ENCODE measurements at regions of chr11 and their contacts with region 1.

Region 1: DNA sequence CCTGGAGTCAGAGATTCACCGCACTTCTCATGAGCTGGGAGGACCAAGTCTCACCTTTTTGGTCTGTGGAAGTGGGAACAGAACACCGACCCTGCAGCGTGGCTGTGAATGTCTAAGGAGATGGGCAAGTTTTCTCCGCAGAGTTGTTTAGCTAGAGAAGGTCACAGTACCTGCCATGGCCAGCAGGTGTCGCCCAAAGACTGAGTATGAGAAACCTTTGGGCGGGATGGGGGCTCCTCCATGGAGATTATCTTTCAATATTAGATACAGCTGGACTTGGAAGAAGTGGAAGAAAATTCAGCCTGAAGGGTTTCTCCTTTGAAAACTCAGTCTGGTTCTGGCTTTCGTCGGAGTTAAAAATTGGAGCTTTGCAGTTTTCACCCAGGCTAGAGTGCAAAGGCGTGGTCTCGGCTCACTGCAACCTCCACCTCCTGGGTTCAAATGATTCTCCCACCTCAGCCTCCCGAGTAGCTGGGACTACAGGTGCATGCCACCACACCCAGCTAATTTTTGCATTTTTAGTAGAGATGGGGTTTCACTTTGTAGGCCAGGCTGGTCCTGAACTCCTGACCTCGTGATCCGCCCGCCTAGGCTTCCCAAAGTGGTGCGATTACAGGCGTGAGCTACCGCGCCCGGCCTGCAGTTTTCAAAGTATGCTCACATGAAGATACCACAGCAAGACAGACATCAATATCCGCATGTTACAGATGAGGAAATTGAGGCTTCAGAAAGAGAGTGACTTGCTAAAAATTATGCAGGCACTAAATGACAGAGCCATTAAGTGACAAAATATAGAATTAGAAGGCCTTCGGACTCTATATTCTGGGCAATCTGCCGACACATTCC is 10.7 kb upstream of the DSCAML1 start:
- DNase-seq: peak; percentile 78
- CTCF ChIP-seq: peak; percentile 87

Region 2: GRCh38 chr11:117468888-117469287 is 338.8 kb before region 1 on chr11:
- CTCF ChIA-PET with region 1: no interaction called
- POLR2A ChIA-PET with region 1: no interaction called
- DNase-seq: no peak
- CTCF ChIP-seq: no peak

Region 3: DNA sequence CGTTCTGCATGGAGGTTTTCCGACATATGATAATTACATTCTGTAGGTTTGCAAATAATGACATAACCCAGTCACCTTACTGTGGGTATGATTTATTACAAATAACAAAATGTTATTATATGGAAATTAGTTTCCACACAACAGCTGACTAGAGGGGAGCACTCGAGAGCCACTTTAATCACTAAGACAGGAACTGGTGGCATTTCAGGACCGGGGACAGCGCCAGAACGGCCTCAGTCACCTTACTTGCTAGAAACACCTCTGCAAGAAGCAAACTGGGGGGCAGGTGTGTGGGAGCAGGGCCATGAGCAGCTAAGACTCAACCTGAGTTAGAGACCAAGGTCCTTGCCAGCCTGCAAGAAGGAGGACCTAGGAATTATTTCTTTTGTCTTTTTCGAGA is 210.6 kb before region 1 on chr11:
- CTCF ChIA-PET with region 1: no interaction called
- POLR2A ChIA-PET with region 1: no interaction called
- DNase-seq: peak; percentile 48
- CTCF ChIP-seq: no peak

Region 4: DNA sequence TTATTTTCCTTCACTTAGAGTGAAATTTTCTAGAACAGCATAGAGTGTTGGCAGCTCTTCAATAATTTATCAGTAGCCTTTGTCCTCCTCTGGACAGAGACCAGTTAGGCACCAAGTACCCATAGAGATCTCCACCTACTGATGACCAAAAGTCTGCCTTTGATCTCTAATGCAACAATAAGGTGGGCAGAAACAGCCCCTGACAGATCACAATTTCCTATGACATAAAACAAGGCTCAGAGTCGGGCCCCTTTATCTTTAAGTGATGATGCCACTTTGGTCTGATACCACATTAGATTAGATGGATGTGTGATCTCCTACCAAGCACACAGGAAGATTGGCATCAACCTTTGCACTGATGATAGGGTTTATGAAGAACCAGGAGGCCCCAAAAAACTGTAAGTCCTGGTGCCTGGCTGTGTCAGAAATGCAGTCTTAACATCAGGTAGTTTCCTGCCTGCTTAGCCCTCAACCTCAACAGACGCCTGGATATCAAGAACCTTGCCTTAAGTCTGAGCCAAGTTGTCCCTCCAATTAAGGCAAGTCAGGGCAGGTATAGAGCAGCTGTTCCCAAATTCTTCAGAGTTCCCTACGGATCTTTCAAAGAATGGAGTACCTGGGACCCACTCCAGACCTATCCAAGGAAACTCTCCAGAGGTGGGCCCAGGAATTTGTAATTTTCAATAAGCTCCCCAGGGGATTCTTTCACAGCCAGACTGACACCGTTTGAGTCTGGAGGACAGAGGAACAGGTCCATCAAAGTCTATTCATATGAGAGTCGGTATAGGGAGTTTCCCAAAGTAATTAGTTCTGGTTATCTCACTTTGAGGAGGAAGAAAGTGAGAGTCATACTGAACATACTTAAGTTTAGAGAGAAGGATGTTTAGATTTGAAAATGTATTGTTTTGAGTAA is 238.6 kb after region 1 on chr11:
- CTCF ChIA-PET with region 1: interaction called, 116 read pairs
- POLR2A ChIA-PET with region 1: no interaction called
- DNase-seq: peak; percentile 43
- CTCF ChIP-seq: no peak

Region 5: GRCh38 chr11:118058311-118059245 is 250.9 kb after region 1 on chr11:
- CTCF ChIA-PET with region 1: interaction called, 116 read pairs
- POLR2A ChIA-PET with region 1: no interaction called
- DNase-seq: no peak
- CTCF ChIP-seq: no peak

Measured in GM10248 (cell line).